ENCODE measurements at regions of chr15 and their contacts with region 1.

Region 1: DNA sequence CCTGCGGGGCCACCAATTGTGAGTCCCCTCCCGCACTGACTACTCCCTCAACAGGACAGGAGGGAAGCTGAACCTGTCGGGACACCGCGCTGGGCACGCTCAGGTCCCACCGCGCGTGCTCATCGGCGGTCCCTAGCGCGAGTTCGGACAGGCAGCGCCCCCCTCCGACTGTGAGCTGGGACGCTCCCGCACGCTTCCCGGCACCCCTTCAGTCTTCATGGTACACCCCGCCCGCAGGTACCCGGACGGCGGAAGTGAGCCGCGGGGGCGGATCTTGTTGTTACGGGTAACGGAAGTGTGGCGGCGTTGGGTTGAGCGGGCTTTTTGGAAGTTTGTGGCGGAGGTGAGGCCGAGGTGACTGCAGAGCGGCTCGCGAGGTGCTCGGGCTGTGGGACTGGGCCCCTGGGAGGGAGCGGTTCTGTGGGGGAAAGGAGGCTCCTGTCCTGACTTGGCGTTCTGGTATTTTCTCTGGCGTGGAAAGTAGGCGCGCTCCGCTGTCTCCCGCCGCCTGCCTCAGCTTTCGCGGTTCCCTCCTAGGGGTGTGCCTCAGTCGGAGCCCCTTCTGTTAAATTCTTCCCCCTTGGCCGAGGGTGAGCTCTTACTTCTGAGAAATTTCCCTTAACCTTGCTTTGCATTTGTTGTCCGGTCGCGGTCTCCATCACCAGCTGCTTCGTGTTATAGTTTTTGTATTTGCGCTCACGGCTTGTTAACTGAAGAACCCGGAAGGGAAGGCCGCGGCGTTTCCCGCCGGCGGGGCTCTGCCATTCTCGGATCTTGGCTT is at the start of gene FANCI:
- DNase-seq: peak; percentile 97

Region 2: GRCh38 chr15:88605189-88606069 is 638.5 kb before region 1 on chr15:
- CTCF ChIA-PET with region 1: no interaction called
- POLR2A ChIA-PET with region 1: no interaction called
- DNase-seq: peak; percentile 68

Region 3: GRCh38 chr15:89206908-89207331 is 37.0 kb before region 1 on chr15:
- CTCF ChIA-PET with region 1: interaction called, 33 read pairs
- POLR2A ChIA-PET with region 1: interaction called, 29 read pairs
- DNase-seq: peak; percentile 95

Region 4: DNA sequence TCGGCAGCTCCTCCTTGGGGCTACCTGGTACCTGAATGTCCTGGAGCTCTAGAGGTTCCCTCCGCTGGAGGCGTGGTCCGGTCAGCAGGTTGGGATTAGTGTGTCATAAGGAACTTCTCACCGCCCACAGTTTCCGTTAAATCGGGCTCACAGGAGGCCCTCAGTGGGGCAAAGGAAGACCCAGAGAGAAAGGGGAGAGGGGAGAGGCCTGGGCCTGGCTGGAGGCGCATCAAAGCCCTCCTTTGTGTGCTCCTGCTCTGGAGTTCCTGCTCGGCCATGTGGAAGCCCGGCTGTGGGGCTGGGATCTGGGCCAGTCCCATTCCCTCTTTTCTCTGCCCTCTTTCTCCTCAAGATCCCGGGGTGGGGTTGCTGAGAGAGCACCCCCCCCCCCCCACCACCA is 22.3 kb before region 1 on chr15 and contains the start of gene RLBP1:
- CTCF ChIA-PET with region 1: interaction called, 3 read pairs
- POLR2A ChIA-PET with region 1: interaction called, 10 read pairs
- DNase-seq: no peak

Region 5: GRCh38 chr15:89230277-89230676 is 13.6 kb before region 1 on chr15:
- CTCF ChIA-PET with region 1: interaction called, 5 read pairs
- POLR2A ChIA-PET with region 1: interaction called, 11 read pairs
- DNase-seq: no peak

Region 6: DNA sequence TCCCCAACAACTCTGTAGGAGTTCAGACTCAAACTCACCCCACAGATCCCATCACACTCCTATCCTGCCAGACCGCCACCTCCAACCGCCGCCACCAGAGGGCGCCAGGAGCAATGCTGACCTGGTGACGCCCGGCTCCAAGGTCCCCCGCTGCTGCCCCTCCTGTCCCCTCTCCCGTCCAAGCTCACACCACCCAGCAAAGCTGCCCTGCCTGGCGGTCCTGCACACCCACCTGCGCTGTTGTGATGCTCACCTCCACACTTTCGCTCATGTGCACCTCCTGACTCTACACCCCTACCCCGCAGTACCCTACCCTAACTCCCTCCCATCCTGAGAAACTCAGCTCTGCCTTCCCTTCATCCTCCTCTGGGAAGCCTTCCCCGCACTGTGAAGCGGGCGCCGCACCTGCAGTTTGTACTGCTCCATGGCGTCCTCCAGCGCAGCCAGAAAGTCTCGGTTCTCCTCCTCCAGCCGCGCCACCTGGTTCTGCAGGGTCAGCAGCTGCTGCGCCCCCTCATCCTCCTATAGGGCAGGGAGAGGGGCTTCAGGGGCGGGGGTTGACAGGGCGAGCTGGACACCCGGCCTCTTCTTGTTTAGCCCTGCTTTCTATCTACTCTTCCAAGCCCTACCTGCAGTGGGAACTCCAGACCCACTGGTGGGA is 403.4 kb after region 1 on chr15:
- CTCF ChIA-PET with region 1: no interaction called
- POLR2A ChIA-PET with region 1: no interaction called
- DNase-seq: peak; percentile 93